ENCODE measurements at regions of chr1 and their contacts with region 1.

Region 1: GRCh38 chr1:19067182-19067911 is 110.9 kb upstream of the IFFO2 start:
- DNase-seq: peak; percentile 82
- ATAC-seq: peak; percentile 48
- H3K4me3 ChIP-seq: peak overlapping the region in 2 of 3 experiments; percentile 9 to 53; a peak in 3 of 6 replicates
- H3K27ac ChIP-seq: no peak overlapping the region
- H3K4me1 ChIP-seq: peaks cover 84% of the 10 kb centered on the region
- H3K27me3 ChIP-seq: peaks cover 0 to 8% of the 10 kb centered on the region in 2 experiments; a peak in 2 of 5 replicates
- CTCF ChIP-seq: peak; percentile 36; the same call in 1 of the 2 replicates
- EP300 ChIP-seq: no peak
- POLR2A ChIP-seq: no peak
- RAD21 ChIP-seq: peak; percentile 19; the same call in 1 of the 2 replicates

Region 2: GRCh38 chr1:19036024-19036812 is 31.1 kb before region 1 on chr1:
- CTCF ChIA-PET with region 1: no interaction called
- POLR2A ChIA-PET with region 1: no interaction called
- in situ Hi-C with region 1: no loop called
- intact Hi-C with region 1: loop called (anchors 2 kb)
- DNase-seq: no peak
- ATAC-seq: peak; percentile 58
- H3K4me3 ChIP-seq: no peak overlapping the region
- H3K27ac ChIP-seq: no peak overlapping the region
- H3K4me1 ChIP-seq: peaks cover 60% of the 10 kb centered on the region
- H3K27me3 ChIP-seq: peaks cover 11 to 55% of the 10 kb centered on the region in 2 experiments
- CTCF ChIP-seq: no peak
- EP300 ChIP-seq: no peak
- POLR2A ChIP-seq: no peak
- RAD21 ChIP-seq: no peak

Region 3: DNA sequence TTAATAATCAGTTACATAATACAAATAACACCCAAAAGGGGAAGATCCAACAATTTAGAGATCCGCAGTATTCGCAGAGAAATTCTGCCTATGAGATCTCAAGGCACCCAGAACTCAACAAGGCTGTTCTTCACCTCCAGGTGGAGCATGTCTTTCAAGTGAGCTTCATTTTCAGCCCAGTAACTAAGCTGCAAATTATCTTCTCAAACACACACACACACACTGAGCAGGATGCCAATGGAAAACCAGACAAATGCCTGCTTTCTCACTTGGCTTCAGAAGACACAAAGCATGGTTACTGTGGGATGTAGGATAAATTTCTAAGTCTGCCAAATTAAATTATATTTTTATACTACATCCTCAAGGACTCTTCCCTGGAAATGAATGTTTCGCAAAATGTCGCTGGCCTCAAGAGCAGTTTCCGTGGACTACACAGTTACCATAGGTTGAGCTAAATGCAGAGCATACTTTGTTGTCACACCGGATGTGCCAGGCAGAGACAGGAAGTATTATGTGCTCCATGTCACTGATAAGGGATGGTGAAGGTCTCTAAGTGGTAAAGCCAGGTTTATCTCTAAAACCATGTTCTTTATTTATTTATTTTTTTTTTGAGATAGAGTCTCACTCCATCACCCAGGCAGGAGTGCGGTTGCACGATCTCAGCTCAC is 112.4 kb after region 1 on chr1:
- CTCF ChIA-PET with region 1: no interaction called
- POLR2A ChIA-PET with region 1: no interaction called
- in situ Hi-C with region 1: no loop called
- intact Hi-C with region 1: no loop called
- DNase-seq: peak; percentile 33
- ATAC-seq: peak; percentile 73
- H3K4me3 ChIP-seq: no peak overlapping the region
- H3K27ac ChIP-seq: no peak overlapping the region
- H3K4me1 ChIP-seq: no peaks in the 10 kb centered on the region
- H3K27me3 ChIP-seq: no peaks in the 10 kb centered on the region
- CTCF ChIP-seq: peak; percentile 50
- EP300 ChIP-seq: no peak
- POLR2A ChIP-seq: no peak
- RAD21 ChIP-seq: no peak